ENCODE measurements at regions of chr4 and their contacts with region 1.

Region 1: DNA sequence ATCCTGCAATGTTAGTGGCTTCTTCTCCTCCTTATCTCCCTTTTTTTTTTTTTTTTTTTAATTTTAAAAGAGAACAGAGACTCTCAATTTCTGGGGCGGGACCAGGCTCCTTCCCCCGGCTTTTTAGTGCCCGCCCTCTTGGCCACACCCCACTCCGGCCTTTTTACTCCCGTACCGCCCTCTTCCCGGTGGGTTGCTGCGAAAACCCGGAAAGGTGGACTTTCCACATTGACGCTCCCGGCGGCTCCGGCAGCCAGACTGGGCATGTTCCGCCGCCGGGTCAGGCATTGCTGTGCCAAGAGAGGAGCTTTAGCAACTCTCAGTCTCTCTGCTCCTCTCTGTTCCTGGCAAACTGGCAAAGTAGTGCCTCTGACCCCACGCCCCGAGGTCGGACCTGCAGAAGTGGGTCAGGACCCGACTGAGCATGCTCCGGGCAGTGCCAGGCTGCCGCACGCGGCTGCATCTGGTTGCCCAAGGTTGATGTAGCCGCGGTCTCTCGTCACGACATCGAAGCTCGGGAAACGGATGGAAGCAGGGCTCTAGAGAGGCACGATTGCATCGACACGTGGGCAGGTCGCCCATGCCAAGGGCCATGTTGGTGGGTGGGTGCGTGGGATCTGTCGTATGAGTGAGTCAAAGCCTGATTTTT is 1.1 kb upstream of the MFAP3L start:
- DNase-seq: peak; percentile 86 to 94 (median 91)
- H3K4me3 ChIP-seq: peak overlapping the region; percentile 66 to 96 (median 88)
- H3K27ac ChIP-seq: peak overlapping the region; percentile 60 to 99 (median 97)
- H3K27me3 ChIP-seq: no peaks in the 10 kb centered on the region
- CTCF ChIP-seq: peak in 22 of 56 donors; percentile 8 to 55 (median 33)

Region 2: DNA sequence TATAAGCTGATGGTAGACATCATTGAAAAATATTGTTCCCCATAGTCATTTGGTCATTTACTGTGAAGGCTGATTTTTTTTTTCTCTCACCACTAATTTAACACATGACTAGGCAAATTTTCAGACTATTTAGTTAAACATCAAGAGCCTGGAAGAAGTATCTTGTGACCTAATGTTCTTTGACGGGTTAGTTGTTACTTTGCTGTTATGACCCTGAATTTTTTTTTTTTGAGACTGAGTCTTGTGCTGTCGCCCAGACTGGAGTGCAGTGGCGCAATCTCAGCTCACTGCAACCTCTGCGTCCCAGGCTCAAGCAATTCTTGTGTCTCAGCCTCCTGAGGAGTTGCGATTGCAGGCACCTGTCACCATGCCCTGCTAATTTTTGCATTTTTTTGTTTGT is 336.5 kb before region 1 on chr4:
- intact Hi-C with region 1: no loop called
- DNase-seq: no peak
- H3K4me3 ChIP-seq: no peak overlapping the region
- H3K27ac ChIP-seq: no peak overlapping the region
- H3K27me3 ChIP-seq: no peaks in the 10 kb centered on the region
- CTCF ChIP-seq: no peak

Region 3: GRCh38 chr4:169810325-169811323 is 216.7 kb before region 1 on chr4:
- intact Hi-C with region 1: loop called (anchors 5 kb)
- DNase-seq: peak in 2 of 10 donors; percentile 24 to 31
- H3K4me3 ChIP-seq: peak overlapping the region in 33 of 59 donors; percentile 2 to 49 (median 24)
- H3K27ac ChIP-seq: peak overlapping the region in 6 of 59 donors; percentile 0 to 62 (median 46)
- H3K27me3 ChIP-seq: no peaks in the 10 kb centered on the region
- CTCF ChIP-seq: peak; percentile 63 to 98 (median 93)

Region 4: DNA sequence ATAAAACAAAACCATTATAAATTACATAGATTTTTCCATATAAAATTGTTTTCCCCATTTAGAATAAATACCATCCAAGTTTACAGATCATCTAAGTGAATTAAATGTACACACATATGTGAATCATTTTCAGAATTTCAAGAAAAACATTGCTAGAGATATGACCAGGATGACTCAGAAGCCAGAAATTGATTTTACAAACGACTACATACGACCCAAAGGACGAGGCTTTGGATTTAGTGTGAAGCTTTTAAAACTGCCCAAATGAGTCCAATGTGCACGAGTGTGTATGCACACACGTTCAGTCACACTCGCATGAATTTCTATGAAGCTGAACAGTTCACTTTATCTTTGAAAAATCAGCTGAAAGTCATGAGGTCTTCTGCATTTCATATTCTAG is 39.1 kb before region 1 on chr4:
- intact Hi-C with region 1: loop called in 1 of 2 experiments (anchors 5 kb)
- DNase-seq: no peak
- H3K4me3 ChIP-seq: no peak overlapping the region
- H3K27ac ChIP-seq: peak overlapping the region in 39 of 59 donors; percentile 2 to 81 (median 57)
- H3K27me3 ChIP-seq: no peaks in the 10 kb centered on the region
- CTCF ChIP-seq: no peak

Measured in dorsolateral prefrontal cortex (tissue), 120 donors.